CD4-positive, alpha-beta memory T cell (primary cell): ENCODE measurements at regions of chr5 and their contacts with region 1.

Region 1: GRCh38 chr5:142748568-142749249 is 21.5 kb upstream of the ARHGAP26 start:
- DNase-seq: peak in 4 of 5 donors; percentile 40 to 49 (median 45)
- H3K4me3 ChIP-seq: no peak overlapping the region
- H3K4me3 Mint-ChIP-seq: no peak overlapping the region
- H3K27ac ChIP-seq: no peak overlapping the region
- H3K27ac Mint-ChIP-seq: no peak overlapping the region
- H3K4me1 ChIP-seq: no peaks in the 10 kb centered on the region
- H3K4me1 Mint-ChIP-seq: peaks cover 0 to 11% (median 0%) of the 10 kb centered on the region in 4 donors
- H3K27me3 ChIP-seq: no peaks in the 10 kb centered on the region
- H3K27me3 Mint-ChIP-seq: peaks cover 0 to 6% of the 10 kb centered on the region in 2 donors

Region 2: DNA sequence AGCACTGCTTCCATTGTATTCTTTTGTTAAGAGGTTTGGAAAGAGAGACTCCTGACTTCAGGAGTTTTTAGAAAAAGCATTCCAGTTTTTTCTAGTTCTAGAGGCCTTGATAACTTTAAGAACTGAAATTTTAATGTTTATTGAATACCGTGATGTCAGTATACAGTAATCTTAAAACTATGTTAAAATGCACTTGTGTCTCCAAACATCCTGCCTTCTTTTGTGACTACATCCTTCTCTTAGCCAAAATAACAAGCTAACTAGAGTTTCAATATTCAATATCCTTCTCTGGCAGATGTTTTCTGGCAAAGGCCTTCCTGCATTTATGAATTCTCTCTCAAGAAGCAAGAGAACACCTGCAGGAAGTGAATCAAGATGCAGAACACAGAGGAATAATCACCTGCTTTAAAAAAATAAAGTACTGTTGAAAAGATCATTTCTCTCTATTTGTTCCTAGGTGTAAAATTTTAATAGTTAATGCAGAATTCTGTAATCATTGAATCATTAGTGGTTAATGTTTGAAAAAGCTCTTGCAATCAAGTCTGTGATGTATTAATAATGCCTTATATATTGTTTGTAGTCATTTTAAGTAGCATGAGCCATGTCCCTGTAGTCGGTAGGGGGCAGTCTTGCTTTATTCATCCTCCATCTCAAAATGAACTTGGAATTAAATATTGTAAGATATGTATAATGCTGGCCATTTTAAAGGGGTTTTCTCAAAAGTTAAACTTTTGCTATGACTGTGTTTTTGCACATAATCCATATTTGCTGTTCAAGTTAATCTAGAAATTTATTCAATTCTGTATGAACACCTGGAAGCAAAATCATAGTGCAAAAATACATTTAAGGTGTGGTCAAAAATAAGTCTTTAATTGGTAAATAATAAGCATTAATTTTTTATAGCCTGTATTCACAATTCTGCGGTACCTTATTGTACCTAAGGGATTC is 597.0 kb before region 1 on chr5:
- CTCF ChIA-PET with region 1: no interaction called
- POLR2A ChIA-PET with region 1: no interaction called
- intact Hi-C with region 1: no loop called
- DNase-seq: peak; percentile 56 to 65 (median 61)
- H3K4me3 ChIP-seq: no peak overlapping the region
- H3K4me3 Mint-ChIP-seq: no peak overlapping the region
- H3K27ac ChIP-seq: no peak overlapping the region
- H3K27ac Mint-ChIP-seq: peak overlapping the region in 2 of 7 donors; percentile 28 to 61
- H3K4me1 ChIP-seq: no peaks in the 10 kb centered on the region
- H3K4me1 Mint-ChIP-seq: peaks cover 0 to 6% (median 4%) of the 10 kb centered on the region in 4 donors
- H3K27me3 ChIP-seq: no peaks in the 10 kb centered on the region
- H3K27me3 Mint-ChIP-seq: no peaks in the 10 kb centered on the region

Region 3: DNA sequence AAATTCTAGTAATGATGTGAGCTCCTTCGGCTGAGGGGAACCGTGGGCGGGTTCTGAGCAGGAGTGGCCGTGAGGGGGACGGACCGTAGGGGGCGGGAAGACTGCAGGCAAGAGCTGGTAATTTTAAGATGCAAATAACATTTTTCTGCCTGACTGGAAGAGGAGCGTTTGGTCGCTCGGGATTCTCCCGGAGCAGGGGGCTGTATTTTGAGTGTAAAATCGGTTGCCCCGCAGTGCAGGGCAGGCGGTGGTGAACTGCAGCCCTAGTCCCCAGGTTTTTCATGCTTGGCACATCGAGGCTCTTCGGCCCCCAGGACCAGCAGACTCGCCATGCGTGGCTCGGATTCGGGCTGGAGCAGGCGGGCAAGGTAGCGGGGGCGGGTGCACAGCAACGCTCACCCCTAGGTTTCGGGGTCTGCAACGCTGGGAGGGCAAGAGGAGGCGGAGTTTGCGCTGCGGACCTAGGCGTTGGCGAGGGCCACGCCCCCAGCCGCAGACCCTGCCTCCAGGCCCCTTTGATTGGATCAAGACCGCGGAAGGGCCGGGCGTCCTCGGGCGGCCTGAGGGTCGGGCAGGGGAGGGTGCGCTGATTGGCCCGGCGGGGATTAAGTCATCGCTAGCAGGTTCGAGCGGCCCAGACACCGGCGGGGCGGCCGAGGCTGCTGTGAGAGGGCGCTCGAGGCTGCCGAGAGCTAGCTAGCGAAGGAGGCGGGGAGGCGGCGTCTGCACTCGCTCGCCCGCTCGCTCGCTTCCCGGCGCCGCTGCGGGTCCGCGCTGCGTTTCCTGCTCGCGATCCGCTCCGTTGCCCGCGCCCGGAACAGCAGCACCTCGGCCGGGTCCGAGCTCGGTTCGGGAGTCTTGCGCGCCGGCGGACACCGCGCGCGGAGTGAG is 21.3 kb after region 1 on chr5 and contains the start of gene ARHGAP26:
- CTCF ChIA-PET with region 1: interaction called, 25 read pairs
- POLR2A ChIA-PET with region 1: no interaction called
- intact Hi-C with region 1: loop called (anchors 2 kb)
- DNase-seq: peak; percentile 87 to 91 (median 88)
- H3K4me3 ChIP-seq: peak within 1 kb of the TSS; percentile 74 to 89
- H3K4me3 Mint-ChIP-seq: peak within 1 kb of the TSS; percentile 94 to 98 (median 96)
- H3K27ac ChIP-seq: peak within 1 kb of the TSS; percentile 53
- H3K27ac Mint-ChIP-seq: peak within 1 kb of the TSS; percentile 85 to 97 (median 94)
- H3K4me1 ChIP-seq: peaks cover 14% of the 10 kb centered on the region
- H3K4me1 Mint-ChIP-seq: peaks cover 18 to 38% (median 26%) of the 10 kb centered on the region in 4 donors
- H3K27me3 ChIP-seq: no peaks in the 10 kb centered on the region
- H3K27me3 Mint-ChIP-seq: no peaks in the 10 kb centered on the region
- total RNA-seq, gene ARHGAP26: 22.6 to 22.7 TPM

Region 4: DNA sequence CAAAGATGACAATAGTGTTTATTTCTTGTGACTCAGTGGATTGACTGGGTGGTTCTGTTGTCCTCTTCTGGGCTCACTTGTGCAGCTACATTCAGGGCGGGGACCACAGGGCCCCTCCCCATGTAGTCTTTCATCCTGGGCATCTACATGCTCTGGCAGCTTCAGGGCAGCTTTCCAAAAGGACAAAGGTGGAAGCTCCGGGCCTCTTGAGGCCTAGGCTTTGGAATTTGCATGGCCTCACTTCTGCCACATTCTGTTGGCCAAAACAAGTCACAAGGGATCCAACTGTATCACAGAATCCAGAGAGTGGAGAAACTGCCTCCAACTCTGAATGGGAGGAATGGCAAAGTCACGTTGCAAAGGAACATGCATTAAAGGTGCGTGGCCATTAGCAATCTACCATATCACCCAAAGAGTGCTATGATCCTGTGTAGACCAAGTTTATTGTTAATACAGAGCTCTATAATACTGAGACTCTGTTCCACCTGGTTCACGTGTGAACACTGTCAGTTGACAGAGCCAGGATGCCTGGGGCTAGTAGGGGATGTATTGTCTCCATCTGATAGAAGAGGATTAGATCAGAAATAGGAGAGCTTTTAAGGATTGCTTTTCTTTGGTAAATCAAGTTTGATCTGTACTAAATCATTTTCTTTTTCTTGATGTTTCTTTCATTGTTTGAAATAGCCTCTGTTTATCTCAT is 85.9 kb after region 1 on chr5:
- CTCF ChIA-PET with region 1: interaction called, 10 read pairs
- POLR2A ChIA-PET with region 1: no interaction called
- intact Hi-C with region 1: no loop called
- DNase-seq: no peak
- H3K4me3 ChIP-seq: no peak overlapping the region
- H3K4me3 Mint-ChIP-seq: no peak overlapping the region
- H3K27ac ChIP-seq: no peak overlapping the region
- H3K27ac Mint-ChIP-seq: no peak overlapping the region
- H3K4me1 ChIP-seq: no peaks in the 10 kb centered on the region
- H3K4me1 Mint-ChIP-seq: peaks cover 4 to 20% (median 11%) of the 10 kb centered on the region in 4 donors
- H3K27me3 ChIP-seq: no peaks in the 10 kb centered on the region
- H3K27me3 Mint-ChIP-seq: no peaks in the 10 kb centered on the region

Region 5: DNA sequence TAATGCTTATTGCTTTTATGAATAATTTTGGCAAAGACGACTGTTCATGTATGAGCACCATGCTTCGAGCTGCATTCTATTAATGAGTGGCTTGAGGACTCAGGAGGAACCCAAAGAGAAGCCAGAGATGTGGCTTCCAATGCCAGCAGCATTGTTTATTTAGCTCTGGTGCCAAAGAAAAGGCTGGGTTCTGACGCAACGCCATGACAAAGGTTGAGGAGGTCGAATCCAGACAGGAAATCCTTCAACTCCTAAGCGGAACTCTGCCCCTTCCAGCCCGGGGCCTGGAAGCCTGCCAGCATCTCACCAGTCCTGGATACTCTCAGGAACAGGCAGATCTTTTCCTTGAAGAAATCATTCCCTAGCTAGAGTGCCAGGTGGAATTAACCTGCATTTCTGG is 125.8 kb after region 1 on chr5:
- CTCF ChIA-PET with region 1: interaction called, 354 read pairs
- POLR2A ChIA-PET with region 1: no interaction called
- intact Hi-C with region 1: no loop called
- DNase-seq: no peak
- H3K4me3 ChIP-seq: no peak overlapping the region
- H3K4me3 Mint-ChIP-seq: no peak overlapping the region
- H3K27ac ChIP-seq: no peak overlapping the region
- H3K27ac Mint-ChIP-seq: no peak overlapping the region
- H3K4me1 ChIP-seq: no peaks in the 10 kb centered on the region
- H3K4me1 Mint-ChIP-seq: peaks cover 0 to 3% (median 0%) of the 10 kb centered on the region in 4 donors
- H3K27me3 ChIP-seq: no peaks in the 10 kb centered on the region
- H3K27me3 Mint-ChIP-seq: no peaks in the 10 kb centered on the region

Region 6: DNA sequence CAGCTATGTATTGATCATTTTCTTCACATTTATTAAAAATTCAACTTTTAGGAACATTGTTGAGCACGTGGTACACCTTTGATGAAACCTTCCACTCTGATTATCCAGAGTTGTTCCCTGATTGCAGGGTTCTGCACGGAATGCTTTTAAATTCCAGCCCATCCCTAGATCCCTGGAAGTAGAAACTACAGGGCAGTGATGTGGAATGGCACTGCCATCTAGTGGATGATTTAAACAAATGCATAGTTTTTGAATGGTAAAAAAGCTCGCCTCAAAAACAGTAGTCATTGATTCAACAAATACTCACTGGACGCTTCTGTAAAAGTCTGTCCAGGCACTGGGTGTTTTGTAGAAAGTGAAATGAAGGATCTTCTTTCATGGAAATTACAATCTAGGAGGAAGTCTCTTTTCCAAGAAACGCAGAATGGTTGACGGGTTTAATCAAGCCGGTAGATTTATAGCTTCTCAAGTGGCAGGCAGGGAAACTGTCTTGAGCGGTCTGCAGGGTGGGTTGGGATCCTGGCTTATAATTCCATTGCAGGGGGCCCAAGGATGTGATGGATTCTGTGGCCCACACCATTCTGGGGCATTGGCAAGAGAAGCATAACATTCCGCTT is 139.9 kb after region 1 on chr5:
- CTCF ChIA-PET with region 1: interaction called, 354 read pairs
- POLR2A ChIA-PET with region 1: interaction called, 3 read pairs
- intact Hi-C with region 1: loop called (anchors 1 kb)
- DNase-seq: peak in 4 of 5 donors; percentile 13 to 26 (median 20)
- H3K4me3 ChIP-seq: no peak overlapping the region
- H3K4me3 Mint-ChIP-seq: no peak overlapping the region
- H3K27ac ChIP-seq: no peak overlapping the region
- H3K27ac Mint-ChIP-seq: peak overlapping the region in 1 of 7 donors; percentile 39
- H3K4me1 ChIP-seq: no peaks in the 10 kb centered on the region
- H3K4me1 Mint-ChIP-seq: peaks cover 0 to 4% (median under 1%) of the 10 kb centered on the region in 4 donors
- H3K27me3 ChIP-seq: no peaks in the 10 kb centered on the region
- H3K27me3 Mint-ChIP-seq: no peaks in the 10 kb centered on the region